MCF 10A (cell line): ENCODE measurements at regions of chr1 and their contacts with region 1.

Region 1: DNA sequence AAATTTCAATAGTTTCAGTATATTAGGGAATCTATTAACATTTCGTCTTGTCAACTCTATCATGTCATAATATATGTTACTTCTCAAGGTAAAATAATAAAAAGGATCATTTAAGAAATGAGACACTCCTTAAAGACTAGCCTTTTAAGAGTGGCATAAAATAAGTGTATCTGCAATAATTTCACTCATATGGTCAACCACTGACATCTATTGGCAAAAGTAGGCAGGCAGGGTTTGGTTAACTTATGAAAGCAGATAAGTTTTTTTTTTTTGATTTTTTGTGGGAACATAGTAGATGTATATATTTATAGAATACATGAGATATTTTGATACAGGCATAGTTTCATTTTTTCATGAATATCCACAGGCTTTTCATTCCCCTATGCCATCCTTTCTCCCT is 5.5 kb upstream of the RGS21 start:
- DNase-seq: peak; percentile 65
- H3K4me3 Mint-ChIP-seq: no peak overlapping the region
- H3K27ac Mint-ChIP-seq: no peak overlapping the region
- H3K4me1 Mint-ChIP-seq: no peaks in the 10 kb centered on the region
- H3K27me3 Mint-ChIP-seq: no peaks in the 10 kb centered on the region
- CTCF ChIP-seq: peak; percentile 73

Region 2: DNA sequence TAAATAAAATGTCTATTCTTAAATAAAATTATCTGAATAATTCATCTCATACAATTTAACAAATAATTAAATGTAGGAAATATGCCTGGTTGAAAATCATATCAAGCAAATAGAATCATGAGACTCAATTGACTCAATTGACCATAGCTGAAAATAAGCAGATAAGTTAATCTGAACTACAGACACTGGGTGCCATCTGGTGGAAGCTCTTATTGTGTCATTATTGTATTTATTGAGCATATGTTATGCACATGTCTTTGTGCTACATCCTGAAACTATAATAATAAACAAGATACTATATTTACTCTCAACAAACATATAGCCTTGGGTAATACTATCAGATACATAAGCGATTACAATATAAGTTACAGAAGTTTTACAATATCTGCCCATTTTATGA is 1874.7 kb before region 1 on chr1:
- CTCF ChIA-PET with region 1: no interaction called
- POLR2A ChIA-PET with region 1: no interaction called
- intact Hi-C with region 1: loop called (anchors 5 kb)
- DNase-seq: peak; percentile 72
- H3K4me3 Mint-ChIP-seq: no peak overlapping the region
- H3K27ac Mint-ChIP-seq: no peak overlapping the region
- H3K4me1 Mint-ChIP-seq: no peaks in the 10 kb centered on the region
- H3K27me3 Mint-ChIP-seq: no peaks in the 10 kb centered on the region
- CTCF ChIP-seq: peak; percentile 69

Region 3: GRCh38 chr1:190633488-190633887 is 1677.8 kb before region 1 on chr1:
- CTCF ChIA-PET with region 1: no interaction called
- POLR2A ChIA-PET with region 1: no interaction called
- intact Hi-C with region 1: loop called (anchors 10 kb)
- DNase-seq: no peak
- H3K4me3 Mint-ChIP-seq: no peak overlapping the region
- H3K27ac Mint-ChIP-seq: no peak overlapping the region
- H3K4me1 Mint-ChIP-seq: no peaks in the 10 kb centered on the region
- H3K27me3 Mint-ChIP-seq: no peaks in the 10 kb centered on the region
- CTCF ChIP-seq: peak; percentile 28

Region 4: GRCh38 chr1:190963321-190963720 is 1348.0 kb before region 1 on chr1:
- CTCF ChIA-PET with region 1: no interaction called
- POLR2A ChIA-PET with region 1: no interaction called
- intact Hi-C with region 1: loop called (anchors 10 kb)
- DNase-seq: no peak
- H3K4me3 Mint-ChIP-seq: no peak overlapping the region
- H3K27ac Mint-ChIP-seq: no peak overlapping the region
- H3K4me1 Mint-ChIP-seq: no peaks in the 10 kb centered on the region
- H3K27me3 Mint-ChIP-seq: no peaks in the 10 kb centered on the region
- CTCF ChIP-seq: no peak

Region 5: DNA sequence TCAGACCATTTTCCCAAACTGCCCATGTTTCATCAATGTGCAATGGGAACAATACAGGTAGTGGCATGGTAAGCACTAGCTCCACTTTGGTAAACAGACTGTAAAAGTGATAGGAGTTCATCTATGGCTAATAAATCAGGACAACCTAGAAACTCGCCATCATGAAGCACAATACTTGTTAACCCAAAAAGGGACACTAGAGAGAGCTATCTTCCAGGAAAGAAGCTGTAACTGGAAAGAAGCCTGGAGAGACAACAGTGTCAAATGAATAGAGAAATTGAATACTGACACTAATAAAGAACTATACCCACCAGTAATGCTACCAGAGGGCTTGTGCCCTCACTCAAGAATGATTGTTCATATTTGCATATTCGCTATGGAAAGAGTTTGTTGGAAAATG is 317.7 kb before region 1 on chr1:
- CTCF ChIA-PET with region 1: interaction called, 4 read pairs
- POLR2A ChIA-PET with region 1: no interaction called
- intact Hi-C with region 1: loop called (anchors 1 kb)
- DNase-seq: peak; percentile 34
- H3K4me3 Mint-ChIP-seq: no peak overlapping the region
- H3K27ac Mint-ChIP-seq: no peak overlapping the region
- H3K4me1 Mint-ChIP-seq: no peaks in the 10 kb centered on the region
- H3K27me3 Mint-ChIP-seq: no peaks in the 10 kb centered on the region
- CTCF ChIP-seq: peak; percentile 31